ENCODE measurements at regions of chr5 and their contacts with region 1.

Region 1: GRCh38 chr5:173331956-173332479 is 3.8 kb upstream of the STC2 start:
- DNase-seq: no peak
- H3K4me3 ChIP-seq: no peak overlapping the region
- CTCF ChIP-seq: peak; percentile 93

Region 2: GRCh38 chr5:173245319-173246134 is 86.5 kb before region 1 on chr5:
- CTCF ChIA-PET with region 1: no interaction called
- POLR2A ChIA-PET with region 1: no interaction called
- DNase-seq: no peak
- H3K4me3 ChIP-seq: no peak overlapping the region
- CTCF ChIP-seq: no peak

Region 3: DNA sequence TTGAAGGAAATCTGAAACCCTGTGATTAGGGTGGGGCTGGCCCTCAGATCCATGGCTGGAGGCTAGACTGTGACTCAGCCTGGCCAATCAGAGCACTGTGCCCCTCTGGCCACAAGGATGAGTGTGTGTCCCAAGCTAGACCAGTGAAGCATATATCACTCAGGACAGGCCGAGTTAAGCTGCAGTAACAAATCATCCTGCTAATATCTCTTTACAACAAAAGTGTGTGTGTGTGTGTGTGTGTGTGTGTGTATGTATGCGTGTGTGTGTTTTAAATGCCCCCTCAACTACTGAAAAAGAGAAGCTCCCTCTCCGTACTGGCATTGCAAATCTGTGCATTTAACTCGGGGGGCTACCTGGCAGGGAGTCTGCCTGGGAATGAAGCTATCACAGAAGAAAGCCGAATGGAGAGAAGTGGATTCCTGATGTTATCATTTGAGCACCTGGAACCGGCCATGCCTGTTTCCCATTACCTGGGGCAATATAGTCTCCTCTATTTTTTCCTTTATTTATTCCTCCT is 29.4 kb before region 1 on chr5:
- CTCF ChIA-PET with region 1: interaction called, 210 read pairs
- POLR2A ChIA-PET with region 1: interaction called, 3 read pairs
- DNase-seq: no peak
- H3K4me3 ChIP-seq: no peak overlapping the region
- CTCF ChIP-seq: no peak

Region 4: GRCh38 chr5:173315495-173316350 is 16.3 kb before region 1 on chr5:
- CTCF ChIA-PET with region 1: interaction called, 11 read pairs
- POLR2A ChIA-PET with region 1: interaction called, 19 read pairs
- DNase-seq: no peak
- H3K4me3 ChIP-seq: no peak overlapping the region; the same call in 1 of the 2 replicates
- CTCF ChIP-seq: no peak

Region 5: DNA sequence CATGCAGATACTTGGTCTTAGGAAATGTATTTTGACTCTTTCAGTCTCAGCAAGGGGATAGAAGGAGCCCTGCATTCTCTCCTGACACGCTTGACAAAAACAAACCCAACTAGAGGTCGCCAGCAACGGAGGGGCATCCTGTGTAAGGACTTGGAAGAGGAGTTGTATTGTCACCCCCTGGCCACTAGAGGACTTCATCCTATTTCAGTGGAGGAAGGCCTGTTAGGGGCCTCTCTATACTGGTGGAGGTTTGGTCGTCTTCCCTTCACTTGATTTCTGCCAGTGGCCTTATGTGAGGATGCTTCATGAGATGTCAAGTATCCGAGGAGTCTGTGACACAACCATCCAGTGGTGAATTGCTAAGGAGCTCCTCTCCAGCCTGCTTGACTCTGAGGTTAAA is 119.0 kb after region 1 on chr5:
- CTCF ChIA-PET with region 1: interaction called, 4 read pairs
- POLR2A ChIA-PET with region 1: interaction called, 17 read pairs
- DNase-seq: no peak
- H3K4me3 ChIP-seq: no peak overlapping the region
- CTCF ChIP-seq: peak; percentile 19